ENCODE measurements at regions of chr9 and their contacts with region 1.

Region 1: GRCh38 chr9:35664531-35665470 is at the start of gene ARHGEF39:
- DNase-seq: peak; percentile 81
- ATAC-seq: peak; percentile 83
- H3K4me3 ChIP-seq: peak within 1 kb of the TSS; percentile 64 to 85 (median 78)
- H3K27ac ChIP-seq: peak within 1 kb of the TSS; percentile 73
- H3K4me1 ChIP-seq: peaks cover 80% of the 10 kb centered on the region
- H3K27me3 ChIP-seq: no peaks in the 10 kb centered on the region
- CTCF ChIP-seq: peak; percentile 84
- EP300 ChIP-seq: peak in 1 of 2 experiments; percentile 14; a peak in 1 of 4 replicates
- POLR2A ChIP-seq: peak in 1 of 2 experiments; percentile 75; a peak in 1 of 4 replicates
- RAD21 ChIP-seq: peak; percentile 79
- total RNA-seq, gene ARHGEF39: 10.4 and 11.2 TPM in 2 replicates

Region 2: DNA sequence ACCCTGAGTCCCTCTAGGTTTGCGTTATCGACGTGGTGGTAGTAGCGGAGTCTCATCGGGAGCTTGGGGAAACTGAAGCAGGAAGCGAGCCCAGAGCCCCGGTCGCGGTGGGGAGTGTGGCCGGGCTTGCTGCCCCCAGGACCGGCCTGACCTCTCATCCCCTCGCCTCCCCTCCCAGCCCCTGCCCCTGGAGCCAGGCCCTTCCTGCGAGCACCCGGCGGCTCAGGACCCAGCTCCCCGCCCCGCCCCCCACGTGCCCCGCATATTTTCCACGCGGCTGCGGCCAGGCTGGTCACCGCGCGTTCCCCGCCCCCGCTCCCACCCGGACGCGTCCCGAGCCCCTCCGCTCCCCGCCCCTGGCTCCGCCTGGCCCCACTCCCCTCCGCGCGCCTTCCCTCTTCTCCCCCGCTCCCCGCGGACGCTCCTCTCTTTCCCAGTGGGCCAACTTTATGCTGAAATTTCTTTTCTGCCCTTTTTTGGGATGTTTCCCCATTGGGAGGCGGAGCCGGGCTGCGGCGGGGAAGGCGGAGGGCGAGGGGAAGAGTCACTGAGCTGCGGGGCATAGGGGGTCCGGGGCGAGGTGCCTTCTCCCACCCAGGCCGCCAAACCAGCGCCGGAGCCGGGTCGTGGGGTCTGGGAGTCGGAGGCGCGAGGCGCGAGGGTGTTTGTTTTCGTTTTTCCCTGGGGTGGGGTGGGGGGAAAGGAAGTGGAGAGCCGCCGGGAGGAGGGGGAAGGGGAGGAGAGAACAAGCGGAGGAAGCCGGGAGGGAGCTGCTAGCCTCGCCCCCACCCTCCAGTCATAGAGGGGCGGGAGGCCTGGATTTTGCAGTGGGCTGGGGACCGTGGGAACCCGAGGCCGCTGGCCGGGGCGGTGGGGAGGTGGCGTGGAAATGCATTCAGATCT is 25.9 kb after region 1 on chr9:
- CTCF ChIA-PET with region 1: no interaction called
- POLR2A ChIA-PET with region 1: interaction called, 68 read pairs
- in situ Hi-C with region 1: loop called (anchors 5 kb)
- intact Hi-C with region 1: loop called (anchors 1 kb)
- DNase-seq: no peak
- ATAC-seq: peak; percentile 53
- H3K4me3 ChIP-seq: peak overlapping the region; percentile 75 to 84 (median 81)
- H3K27ac ChIP-seq: peak overlapping the region; percentile 26
- H3K4me1 ChIP-seq: peaks cover 65% of the 10 kb centered on the region
- H3K27me3 ChIP-seq: no peaks in the 10 kb centered on the region
- CTCF ChIP-seq: no peak
- EP300 ChIP-seq: no peak
- POLR2A ChIP-seq: peak in 1 of 2 experiments; percentile 42; a peak in 1 of 4 replicates
- RAD21 ChIP-seq: no peak

Region 3: DNA sequence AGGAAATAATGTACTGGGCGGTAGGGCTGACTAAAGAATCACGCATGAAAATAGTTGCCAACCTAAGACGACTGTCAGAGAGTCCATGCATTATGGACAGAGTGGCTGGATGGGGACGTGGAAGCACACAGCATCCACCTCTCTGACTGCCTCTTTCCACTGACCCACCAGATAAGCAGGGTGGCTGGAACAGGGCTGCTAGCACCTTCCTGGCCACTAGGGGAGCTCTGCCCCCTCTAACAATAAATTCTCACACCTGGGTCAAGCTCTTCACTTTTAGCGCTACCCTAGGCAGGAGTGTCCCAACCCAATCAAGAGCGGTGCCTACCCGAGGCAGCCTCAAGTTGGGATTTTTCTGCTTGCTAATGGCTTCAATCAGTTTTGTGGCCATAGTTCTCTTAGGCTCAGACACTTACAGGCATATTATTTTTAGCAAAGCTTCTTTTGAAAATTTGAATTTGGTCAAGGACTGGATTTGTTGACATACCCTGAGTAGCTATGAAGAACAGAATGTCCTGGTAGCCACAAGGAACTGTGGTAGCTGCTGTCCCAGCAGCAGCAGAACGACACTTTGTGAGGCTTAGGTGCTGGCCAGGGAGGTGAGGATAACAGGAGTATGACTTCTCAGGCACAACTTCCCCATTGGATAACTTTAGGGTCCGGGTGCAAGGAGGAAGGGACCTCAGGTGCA is 31.9 kb after region 1 on chr9:
- CTCF ChIA-PET with region 1: interaction called, 5 read pairs
- POLR2A ChIA-PET with region 1: interaction called, 68 read pairs
- in situ Hi-C with region 1: loop called (anchors 5 kb)
- intact Hi-C with region 1: loop called (anchors 1 kb)
- DNase-seq: peak; percentile 59
- ATAC-seq: peak; percentile 92
- H3K4me3 ChIP-seq: no peak overlapping the region
- H3K27ac ChIP-seq: no peak overlapping the region
- H3K4me1 ChIP-seq: peaks cover 19% of the 10 kb centered on the region
- H3K27me3 ChIP-seq: no peaks in the 10 kb centered on the region
- CTCF ChIP-seq: peak; percentile 82
- EP300 ChIP-seq: no peak
- POLR2A ChIP-seq: peak in 1 of 2 experiments; percentile 24; a peak in 1 of 4 replicates
- RAD21 ChIP-seq: peak; percentile 71

Measured in HepG2 (cell line).